Ascending aorta (tissue), 2 donors: ENCODE measurements at regions of chr3 and their contacts with region 1.

Region 1: DNA sequence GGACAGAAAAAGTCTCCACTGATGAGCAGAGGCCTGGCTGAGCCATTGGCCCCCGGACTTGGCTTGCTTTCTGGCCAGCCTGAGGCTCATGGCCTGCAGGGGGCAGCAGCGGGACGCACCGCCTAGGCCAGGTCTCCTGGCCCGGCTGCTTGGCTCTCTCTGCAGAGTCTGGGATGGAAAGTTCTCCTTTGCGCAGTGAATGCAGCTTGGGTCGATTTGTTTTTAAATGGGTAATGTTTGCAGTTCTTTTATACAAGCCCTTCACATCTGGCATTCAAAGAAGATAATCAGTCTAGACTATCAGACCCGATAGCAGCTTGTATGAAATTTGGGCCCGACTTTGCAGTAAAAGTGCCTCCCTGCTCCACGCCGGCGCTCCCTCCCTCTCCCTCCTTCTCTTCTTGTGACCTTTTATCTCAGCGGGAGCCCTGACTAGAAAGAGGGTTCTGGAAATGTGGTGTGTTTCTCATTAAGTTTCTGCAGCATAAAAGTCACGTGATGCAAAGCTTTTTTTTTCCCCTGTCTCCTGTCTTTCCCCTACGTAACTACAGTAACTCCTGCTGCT is 59.9 kb downstream of the ZNF621 start:
- DNase-seq: peak; percentile 36 to 91
- H3K4me3 ChIP-seq: no peak overlapping the region
- H3K27ac ChIP-seq: no peak overlapping the region
- H3K4me1 ChIP-seq: peaks cover 0 to 8% of the 10 kb centered on the region in 2 donors
- H3K27me3 ChIP-seq: no peaks in the 10 kb centered on the region
- CTCF ChIP-seq: peak; percentile 81 to 97 (median 92)

Region 2: DNA sequence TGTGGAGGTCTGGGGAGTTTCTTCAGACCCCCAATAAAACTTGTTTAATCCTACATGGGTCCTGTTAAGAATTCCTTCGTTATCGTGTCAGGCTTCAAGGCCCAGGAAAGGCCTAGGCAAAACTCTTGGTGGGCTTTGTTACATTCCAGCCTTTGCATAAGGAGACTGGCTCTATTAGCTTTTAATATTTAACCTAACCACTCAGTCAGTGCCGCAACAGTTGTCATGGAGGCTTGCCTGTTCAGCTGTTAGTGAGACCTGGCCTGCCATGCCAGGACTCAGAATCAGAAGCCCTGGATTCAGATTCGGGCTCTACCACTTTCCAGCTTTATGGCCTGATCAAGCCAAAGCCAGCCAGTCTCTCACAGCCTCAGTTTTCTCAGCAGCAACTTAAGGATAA is 255.6 kb before region 1 on chr3:
- intact Hi-C with region 1: loop called (anchors 5 kb)
- DNase-seq: no peak
- H3K4me3 ChIP-seq: no peak overlapping the region
- H3K27ac ChIP-seq: no peak overlapping the region
- H3K4me1 ChIP-seq: no peaks in the 10 kb centered on the region
- H3K27me3 ChIP-seq: no peaks in the 10 kb centered on the region
- CTCF ChIP-seq: no peak

Region 3: DNA sequence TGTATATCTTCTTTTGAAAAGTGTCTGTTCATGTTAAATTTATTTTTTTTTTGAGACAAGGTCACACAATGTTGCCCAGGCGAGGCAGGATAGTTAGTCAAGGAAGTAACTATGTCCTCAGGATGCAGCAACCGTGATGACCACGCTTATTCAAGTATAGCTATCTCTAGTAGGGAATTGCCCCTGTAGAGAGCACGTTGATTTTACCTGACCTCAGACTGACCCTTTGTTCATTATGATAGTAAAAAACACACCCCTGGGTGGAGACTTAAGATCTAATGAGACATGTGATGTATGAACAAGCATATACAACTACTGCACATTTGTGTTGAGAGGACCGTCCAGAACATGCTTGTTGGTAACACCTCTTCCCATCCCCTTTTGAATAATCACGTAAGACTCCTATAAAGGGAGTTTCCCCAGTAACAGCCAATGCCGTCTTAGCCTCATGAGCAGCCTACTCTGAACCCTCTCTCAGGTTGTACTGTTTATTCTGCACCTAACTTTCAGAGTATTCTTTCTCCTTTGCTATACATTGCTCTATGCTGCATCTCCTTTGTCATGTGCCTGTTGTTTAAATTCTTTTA is 27.0 kb before region 1 on chr3:
- intact Hi-C with region 1: no loop called
- DNase-seq: no peak
- H3K4me3 ChIP-seq: no peak overlapping the region
- H3K27ac ChIP-seq: no peak overlapping the region
- H3K4me1 ChIP-seq: no peaks in the 10 kb centered on the region
- H3K27me3 ChIP-seq: no peaks in the 10 kb centered on the region
- CTCF ChIP-seq: no peak

Region 4: DNA sequence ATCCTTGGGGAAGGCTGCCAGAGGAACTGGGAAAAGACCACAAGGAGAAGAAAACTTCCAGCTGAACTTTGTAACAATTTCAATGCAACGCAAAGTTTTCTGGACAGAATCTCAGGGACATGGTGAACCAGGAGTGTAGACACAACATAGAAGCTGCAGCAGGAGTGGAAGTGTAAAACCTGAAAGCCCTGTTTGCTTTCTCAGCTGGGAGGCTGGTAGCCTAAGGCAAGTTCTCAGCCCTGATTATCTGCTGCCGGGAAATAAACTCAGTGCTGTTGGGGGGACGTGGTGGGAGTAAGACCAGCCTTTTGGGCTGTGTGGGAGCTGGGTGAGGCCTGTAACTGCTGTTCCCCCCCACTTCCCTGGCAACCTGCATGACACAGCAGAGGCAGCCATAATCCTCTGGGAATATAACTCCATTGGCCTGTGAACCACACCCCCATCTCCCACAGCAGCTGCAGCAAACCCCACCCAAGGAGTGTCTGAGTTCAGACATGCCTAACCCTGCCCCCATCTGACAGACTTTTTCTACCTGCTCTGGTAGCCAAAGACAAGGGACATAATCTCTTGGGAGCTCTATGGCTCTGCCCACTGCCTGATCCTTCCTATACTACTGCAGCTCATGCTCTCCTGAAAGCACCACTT is 46.8 kb after region 1 on chr3:
- intact Hi-C with region 1: no loop called
- DNase-seq: no peak
- H3K4me3 ChIP-seq: no peak overlapping the region
- H3K27ac ChIP-seq: no peak overlapping the region
- H3K4me1 ChIP-seq: no peaks in the 10 kb centered on the region
- H3K27me3 ChIP-seq: no peaks in the 10 kb centered on the region
- CTCF ChIP-seq: no peak

Region 5: DNA sequence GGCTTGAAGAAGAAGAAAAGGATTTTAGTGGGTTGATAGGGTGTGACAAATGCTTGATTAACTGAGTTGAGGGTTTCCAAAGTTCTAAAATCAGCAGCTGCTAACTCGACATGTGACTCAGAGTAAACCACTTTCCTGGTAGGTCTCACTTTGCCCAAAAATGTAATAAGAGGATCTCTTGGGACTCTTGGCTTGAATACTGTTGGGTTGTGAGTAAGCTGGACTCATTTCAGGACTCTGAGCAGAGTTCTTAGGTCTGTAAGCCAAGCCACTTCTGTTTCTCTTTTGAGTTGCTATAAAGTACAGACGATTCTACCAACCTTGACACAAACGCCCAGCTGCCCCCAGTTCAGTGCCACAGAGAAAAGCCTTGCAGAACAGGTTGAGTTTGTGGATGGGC is 181.2 kb after region 1 on chr3:
- intact Hi-C with region 1: loop called (anchors 10 kb)
- DNase-seq: peak in 1 of 2 donors; percentile 71
- H3K4me3 ChIP-seq: peak overlapping the region in 1 of 2 donors; percentile 31
- H3K27ac ChIP-seq: peak overlapping the region; percentile 15 to 21
- H3K4me1 ChIP-seq: peaks cover 2 to 19% of the 10 kb centered on the region in 2 donors
- H3K27me3 ChIP-seq: no peaks in the 10 kb centered on the region
- CTCF ChIP-seq: no peak

Region 6: GRCh38 chr3:40971191-40972168 is 386.8 kb after region 1 on chr3:
- intact Hi-C with region 1: loop called (anchors 10 kb)
- DNase-seq: peak; percentile 52 to 88
- H3K4me3 ChIP-seq: no peak overlapping the region
- H3K27ac ChIP-seq: peak overlapping the region in 1 of 2 donors; percentile 42
- H3K4me1 ChIP-seq: peaks cover 5 to 7% of the 10 kb centered on the region in 2 donors
- H3K27me3 ChIP-seq: no peaks in the 10 kb centered on the region
- CTCF ChIP-seq: no peak

Region 7: DNA sequence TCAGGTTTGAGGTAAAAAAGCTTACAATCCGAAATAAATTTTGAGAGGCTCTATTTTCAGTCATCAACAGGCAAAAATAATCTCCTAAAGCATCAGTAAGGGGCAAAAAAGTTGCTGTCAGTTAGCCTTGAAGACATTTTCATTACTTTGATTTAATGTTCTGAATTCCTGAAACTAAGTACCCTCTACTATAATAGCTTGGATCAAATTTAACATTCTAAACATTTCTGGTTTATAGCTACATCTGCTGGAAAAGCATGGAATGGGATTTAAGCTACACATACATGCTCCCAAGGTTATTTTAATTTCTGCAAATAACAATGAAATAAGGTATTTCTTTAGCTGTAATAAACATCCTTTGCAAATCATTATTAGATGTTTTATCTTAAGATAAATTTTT is 1131.8 kb after region 1 on chr3:
- intact Hi-C with region 1: loop called (anchors 5 kb)
- DNase-seq: no peak
- H3K4me3 ChIP-seq: no peak overlapping the region
- H3K27ac ChIP-seq: no peak overlapping the region
- H3K4me1 ChIP-seq: no peaks in the 10 kb centered on the region
- H3K27me3 ChIP-seq: no peaks in the 10 kb centered on the region
- CTCF ChIP-seq: peak in 1 of 3 experiments; percentile 30

Region 8: GRCh38 chr3:41881233-41881821 is 1296.6 kb after region 1 on chr3:
- intact Hi-C with region 1: loop called (anchors 2 kb)
- DNase-seq: no peak
- H3K4me3 ChIP-seq: no peak overlapping the region
- H3K27ac ChIP-seq: no peak overlapping the region
- H3K4me1 ChIP-seq: no peaks in the 10 kb centered on the region
- H3K27me3 ChIP-seq: no peaks in the 10 kb centered on the region
- CTCF ChIP-seq: peak; percentile 60 to 70 (median 64)